BJ (cell line): ENCODE measurements at regions of chr5 and their contacts with region 1.

Region 1: DNA sequence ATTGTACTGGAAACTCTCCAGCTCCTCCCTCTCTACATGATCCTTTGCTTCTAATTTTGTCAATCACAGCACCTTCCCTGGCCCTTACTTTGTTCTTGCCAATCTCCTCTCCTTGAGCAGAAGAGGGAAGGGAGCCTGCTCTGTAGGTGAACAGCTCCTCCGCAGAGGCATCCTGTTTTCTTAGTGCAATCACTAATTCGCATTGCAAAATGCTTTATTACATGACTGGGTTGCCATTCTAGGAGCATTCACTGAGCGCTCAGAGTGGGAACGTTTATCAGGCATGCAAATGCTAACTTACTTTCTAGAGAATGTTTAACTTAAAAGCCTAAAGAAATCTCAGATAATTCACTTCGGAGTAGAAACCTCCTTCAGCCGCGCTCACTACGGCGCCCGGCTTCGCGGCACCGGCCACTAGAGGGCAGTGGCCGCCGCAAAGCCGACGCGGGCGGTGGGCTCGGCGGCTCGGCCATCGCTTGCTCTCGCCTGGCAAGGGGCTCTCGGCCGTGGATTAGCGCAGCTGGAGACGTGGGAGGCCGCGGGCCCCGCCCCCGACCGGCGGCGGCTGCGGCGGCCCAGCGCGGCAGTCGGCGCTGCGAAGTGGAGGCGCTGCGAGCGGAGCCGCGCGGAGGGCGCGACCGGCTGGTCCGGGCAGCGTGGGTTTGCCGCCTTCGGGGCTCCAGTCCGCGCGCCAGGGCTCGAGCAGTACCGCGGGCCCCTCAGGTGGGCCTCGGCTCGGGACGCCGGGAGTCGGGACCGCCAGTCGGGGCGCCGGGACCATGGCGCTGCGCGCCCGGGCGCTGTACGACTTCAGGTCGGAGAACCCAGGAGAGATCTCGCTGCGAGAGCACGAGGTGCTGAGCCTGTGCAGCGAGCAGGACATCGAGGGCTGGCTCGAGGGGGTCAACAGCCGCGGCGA is at the start of gene SNX18:
- DNase-seq: peak; percentile 37
- H3K4me3 ChIP-seq: peak within 1 kb of the TSS; percentile 65
- H3K27me3 ChIP-seq: no peaks in the 10 kb centered on the region
- CTCF ChIP-seq: peak; percentile 75
- polyA plus RNA-seq, gene SNX18: 33.3 and 47.0 TPM in 2 replicates

Region 2: DNA sequence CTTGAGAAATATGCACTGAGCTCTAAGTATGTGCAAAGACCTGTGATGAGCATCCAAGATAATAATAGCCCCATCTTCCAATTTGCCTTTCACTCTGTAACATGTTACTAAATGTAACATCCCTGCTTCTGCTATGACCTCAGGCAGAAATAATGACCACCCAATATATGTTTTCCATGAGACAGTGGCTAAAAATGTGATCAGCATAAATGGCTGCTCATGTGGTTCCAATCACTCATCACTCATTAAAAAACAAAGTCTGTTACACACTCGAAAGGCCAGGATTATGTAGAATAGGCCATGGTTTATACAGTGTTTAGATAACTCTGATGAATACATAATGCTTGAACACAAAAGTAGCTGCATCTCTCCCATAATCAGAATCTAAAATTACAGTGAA is 1336.4 kb before region 1 on chr5:
- CTCF ChIA-PET with region 1: no interaction called
- POLR2A ChIA-PET with region 1: no interaction called
- DNase-seq: no peak
- H3K4me3 ChIP-seq: no peak overlapping the region
- H3K27me3 ChIP-seq: no peaks in the 10 kb centered on the region
- CTCF ChIP-seq: no peak

Region 3: DNA sequence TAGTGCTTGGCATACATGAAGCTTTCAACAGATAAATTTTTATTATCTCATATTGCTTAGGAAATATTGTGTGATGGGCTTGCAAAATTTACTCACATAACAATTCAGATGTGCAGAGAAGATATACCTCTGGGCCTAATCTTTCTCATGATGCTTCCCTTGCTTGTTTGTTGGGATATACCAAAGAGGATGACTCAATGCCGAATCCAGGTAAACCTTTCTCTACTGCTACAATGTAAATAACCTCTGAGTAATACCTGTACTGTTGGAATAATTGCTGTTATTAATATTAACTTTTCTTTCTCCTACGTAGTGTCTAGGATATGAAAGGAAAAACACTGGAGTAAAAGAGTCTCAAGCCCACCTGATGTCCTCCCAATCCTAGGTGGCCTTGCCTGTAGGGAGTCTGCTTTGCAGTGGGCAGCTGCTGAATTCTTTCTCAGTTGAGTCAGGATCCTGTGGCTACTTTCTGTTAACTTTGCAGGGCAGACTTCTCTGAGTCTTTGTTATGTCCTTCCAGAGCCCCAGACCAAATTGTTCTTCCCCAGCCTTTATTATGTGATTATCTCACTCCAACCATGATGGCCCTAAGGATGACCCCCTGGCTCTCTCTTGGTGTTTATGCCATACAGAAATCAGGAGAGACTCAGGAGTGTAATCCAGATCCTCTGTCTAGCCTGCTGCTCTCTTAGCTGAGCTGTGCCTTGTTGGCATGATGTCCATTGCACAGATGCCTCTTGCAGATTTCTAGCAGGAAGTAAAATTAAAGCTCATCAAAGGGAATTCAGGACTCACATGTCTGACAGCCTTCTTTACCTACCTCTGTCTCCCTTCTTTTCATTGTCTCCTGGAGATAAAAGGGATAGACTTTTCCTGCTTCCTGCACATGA is 208.2 kb after region 1 on chr5:
- CTCF ChIA-PET with region 1: interaction called, 11 read pairs
- POLR2A ChIA-PET with region 1: no interaction called
- DNase-seq: no peak
- H3K4me3 ChIP-seq: no peak overlapping the region
- H3K27me3 ChIP-seq: no peaks in the 10 kb centered on the region
- CTCF ChIP-seq: no peak

Region 4: GRCh38 chr5:54820346-54821134 is 303.1 kb after region 1 on chr5:
- CTCF ChIA-PET with region 1: interaction called, 11 read pairs
- POLR2A ChIA-PET with region 1: no interaction called
- DNase-seq: peak; percentile 41
- H3K4me3 ChIP-seq: no peak overlapping the region
- H3K27me3 ChIP-seq: 0 out of 2 replicates have a peak, but pooled peaks cover 1% of the 10 kb centered on the region
- CTCF ChIP-seq: no peak

Region 5: GRCh38 chr5:54867310-54867944 is 350.0 kb after region 1 on chr5:
- CTCF ChIA-PET with region 1: interaction called, 110 read pairs
- POLR2A ChIA-PET with region 1: no interaction called
- DNase-seq: no peak
- H3K4me3 ChIP-seq: no peak overlapping the region
- H3K27me3 ChIP-seq: peaks cover 2% of the 10 kb centered on the region; the same call in 1 of the 2 replicates
- CTCF ChIP-seq: peak; percentile 55

Region 6: DNA sequence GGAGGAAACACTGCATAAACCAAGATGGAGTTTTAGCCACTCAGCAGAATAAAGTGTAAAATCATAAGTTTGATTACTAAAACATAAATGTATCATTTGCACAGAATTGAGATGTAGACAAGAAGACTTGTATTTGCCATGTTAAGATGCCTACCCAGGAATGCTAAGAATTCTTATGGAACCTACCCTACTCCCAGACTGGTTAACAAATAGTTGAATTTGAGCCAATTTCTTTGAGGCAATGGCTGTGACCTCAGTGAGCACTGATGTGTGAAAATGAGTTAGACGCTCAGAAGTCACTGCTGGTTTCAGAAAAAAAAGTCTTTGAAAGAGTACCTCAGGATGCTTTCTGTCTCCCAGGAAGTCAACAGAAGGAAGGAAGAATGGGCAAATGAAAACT is 372.4 kb after region 1 on chr5:
- CTCF ChIA-PET with region 1: interaction called, 35 read pairs
- POLR2A ChIA-PET with region 1: interaction called, 3 read pairs
- DNase-seq: peak; percentile 48
- H3K4me3 ChIP-seq: no peak overlapping the region
- H3K27me3 ChIP-seq: peaks cover 2% of the 10 kb centered on the region
- CTCF ChIP-seq: no peak

Region 7: GRCh38 chr5:55159763-55160492 is 642.5 kb after region 1 on chr5 and contains the start of gene GPX8:
- CTCF ChIA-PET with region 1: interaction called, 14 read pairs
- POLR2A ChIA-PET with region 1: no interaction called
- DNase-seq: peak; percentile 59
- H3K4me3 ChIP-seq: peak within 1 kb of the TSS; percentile 67
- H3K27me3 ChIP-seq: no peaks in the 10 kb centered on the region
- CTCF ChIP-seq: peak; percentile 57
- polyA plus RNA-seq, gene GPX8: 115 and 271 TPM in 2 replicates